H1 (cell line): ENCODE measurements at regions of chr12 and their contacts with region 1.

Region 1: DNA sequence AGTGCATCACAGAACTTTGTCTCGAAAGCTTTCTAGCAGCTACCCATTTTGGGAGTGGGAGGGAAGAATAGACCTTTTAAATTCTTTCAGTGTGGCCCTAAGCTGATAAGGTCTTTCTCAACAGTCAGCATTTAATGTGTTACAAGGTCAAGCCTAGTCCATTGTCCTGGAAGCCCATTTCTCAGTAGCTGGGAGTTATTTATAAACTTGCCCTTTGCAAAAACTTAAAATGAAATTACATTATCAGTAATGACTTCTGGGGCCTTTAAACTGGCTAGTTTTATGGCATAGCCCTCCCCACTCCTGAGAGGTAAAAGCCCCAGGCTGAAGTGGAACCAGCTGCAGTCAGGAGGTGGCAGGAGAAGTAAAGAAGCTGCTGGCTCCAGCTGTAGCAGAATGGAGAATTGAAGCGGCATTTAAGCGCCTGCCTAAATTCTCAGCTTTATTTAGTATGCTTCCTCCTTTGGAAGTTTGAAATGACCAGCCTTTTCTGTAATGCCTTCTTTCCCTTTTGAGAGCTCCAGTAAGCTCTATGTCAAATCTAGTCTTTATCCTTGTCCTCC is 12.4 kb downstream of the COPZ1 start:
- DNase-seq: no peak
- H3K4me3 ChIP-seq: no peak overlapping the region
- H3K27ac ChIP-seq: no peak overlapping the region
- H3K4me1 ChIP-seq: no peaks in the 10 kb centered on the region
- H3K27me3 ChIP-seq: no peaks in the 10 kb centered on the region
- CTCF ChIP-seq: no peak
- EP300 ChIP-seq: no peak
- POLR2A ChIP-seq: no peak
- RAD21 ChIP-seq: peak in 1 of 2 experiments; percentile 26; a peak in 1 of 4 replicates

Region 2: GRCh38 chr12:54306925-54307741 is 30.2 kb before region 1 on chr12:
- CTCF ChIA-PET with region 1: interaction called, 618 read pairs
- POLR2A ChIA-PET with region 1: interaction called, 4 read pairs
- DNase-seq: no peak
- H3K4me3 ChIP-seq: no peak overlapping the region
- H3K27ac ChIP-seq: no peak overlapping the region
- H3K4me1 ChIP-seq: peaks cover 4 to 18% (median 12%) of the 10 kb centered on the region in 4 experiments
- H3K27me3 ChIP-seq: no peaks in the 10 kb centered on the region
- CTCF ChIP-seq: no peak
- EP300 ChIP-seq: no peak
- POLR2A ChIP-seq: no peak
- RAD21 ChIP-seq: no peak

Region 3: DNA sequence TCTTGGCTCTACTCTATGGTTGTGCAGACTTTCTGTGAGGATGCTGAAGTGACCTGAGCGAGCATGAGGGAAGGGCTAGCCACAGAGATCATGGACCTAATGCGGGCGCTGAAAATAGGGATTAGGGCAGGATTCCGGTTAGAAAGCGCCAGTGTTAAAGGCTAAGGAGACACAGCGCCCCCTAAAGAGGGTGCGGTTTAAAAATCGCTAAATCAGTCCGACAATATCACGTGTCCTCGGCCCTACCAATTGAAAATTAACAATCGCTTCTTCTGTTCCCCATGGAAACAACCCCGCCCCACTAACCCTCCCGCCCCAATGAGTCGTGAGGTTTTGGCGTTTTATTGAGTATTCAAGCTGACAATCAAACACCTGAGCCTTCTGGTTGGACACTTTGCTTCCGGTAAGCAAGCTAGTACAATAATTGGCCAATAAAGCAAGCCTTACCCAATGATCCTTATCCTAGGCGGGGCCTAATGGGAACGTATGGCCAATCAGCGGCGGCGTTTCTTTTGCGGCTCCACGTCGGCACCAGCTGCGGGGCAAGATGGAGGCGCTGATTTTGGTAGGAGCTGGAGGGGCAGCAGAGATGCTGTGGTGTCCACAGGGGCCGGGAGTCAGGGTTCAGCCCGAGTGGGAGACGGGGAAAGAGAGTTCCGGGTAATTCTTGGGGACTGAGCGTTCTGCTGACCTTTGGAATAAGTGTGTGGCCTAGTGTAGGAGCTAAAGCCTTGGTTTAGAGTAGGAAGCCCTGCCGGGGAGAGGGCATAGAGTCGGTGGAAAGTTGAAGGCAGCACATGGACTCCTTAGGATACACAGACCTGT is 12.5 kb before region 1 on chr12 and contains the start of gene COPZ1:
- CTCF ChIA-PET with region 1: interaction called, 38 read pairs
- POLR2A ChIA-PET with region 1: interaction called, 14 read pairs
- DNase-seq: peak; percentile 87 to 97
- H3K4me3 ChIP-seq: peak within 1 kb of the TSS; percentile 79 to 97 (median 88)
- H3K27ac ChIP-seq: peak within 1 kb of the TSS; percentile 83
- H3K4me1 ChIP-seq: peaks cover 0 to 10% (median 4%) of the 10 kb centered on the region in 4 experiments; a peak in 2 of 7 replicates
- H3K27me3 ChIP-seq: no peaks in the 10 kb centered on the region
- CTCF ChIP-seq: peak; percentile 57 to 89 (median 81)
- EP300 ChIP-seq: no peak
- POLR2A ChIP-seq: peak; percentile 54 to 87
- RAD21 ChIP-seq: peak; percentile 80 to 82
- total RNA-seq, gene COPZ1: 94.2 and 103 TPM in 2 replicates

Region 4: GRCh38 chr12:54352022-54352531 is 14.7 kb after region 1 on chr12:
- CTCF ChIA-PET with region 1: interaction called, 348 read pairs
- POLR2A ChIA-PET with region 1: interaction called, 109 read pairs
- DNase-seq: peak; percentile 50 to 70
- H3K4me3 ChIP-seq: peak overlapping the region; percentile 44 to 64 (median 62)
- H3K27ac ChIP-seq: peak overlapping the region; percentile 61
- H3K4me1 ChIP-seq: peaks cover 27 to 69% (median 33%) of the 10 kb centered on the region in 4 experiments
- H3K27me3 ChIP-seq: peaks cover 0 to 9% (median 4%) of the 10 kb centered on the region in 4 experiments; a peak in 3 of 7 replicates
- CTCF ChIP-seq: no peak
- EP300 ChIP-seq: no peak
- POLR2A ChIP-seq: peak in 1 of 2 experiments; percentile 41; a peak in 1 of 3 replicates
- RAD21 ChIP-seq: no peak